WTC11 (cell line): ENCODE measurements at regions of chr11 and their contacts with region 1.

Region 1: GRCh38 chr11:70755410-70756161 is 357.3 kb downstream of the CTTN start:
- DNase-seq: peak; percentile 90
- ATAC-seq: peak; percentile 97
- H3K4me3 Mint-ChIP-seq: no peak overlapping the region
- H3K27ac Mint-ChIP-seq: no peak overlapping the region; the same call in 1 of the 2 replicates
- H3K4me1 Mint-ChIP-seq: peaks cover 15% of the 10 kb centered on the region
- H3K27me3 Mint-ChIP-seq: peaks cover 6% of the 10 kb centered on the region
- CTCF ChIP-seq: peak; percentile 92

Region 2: DNA sequence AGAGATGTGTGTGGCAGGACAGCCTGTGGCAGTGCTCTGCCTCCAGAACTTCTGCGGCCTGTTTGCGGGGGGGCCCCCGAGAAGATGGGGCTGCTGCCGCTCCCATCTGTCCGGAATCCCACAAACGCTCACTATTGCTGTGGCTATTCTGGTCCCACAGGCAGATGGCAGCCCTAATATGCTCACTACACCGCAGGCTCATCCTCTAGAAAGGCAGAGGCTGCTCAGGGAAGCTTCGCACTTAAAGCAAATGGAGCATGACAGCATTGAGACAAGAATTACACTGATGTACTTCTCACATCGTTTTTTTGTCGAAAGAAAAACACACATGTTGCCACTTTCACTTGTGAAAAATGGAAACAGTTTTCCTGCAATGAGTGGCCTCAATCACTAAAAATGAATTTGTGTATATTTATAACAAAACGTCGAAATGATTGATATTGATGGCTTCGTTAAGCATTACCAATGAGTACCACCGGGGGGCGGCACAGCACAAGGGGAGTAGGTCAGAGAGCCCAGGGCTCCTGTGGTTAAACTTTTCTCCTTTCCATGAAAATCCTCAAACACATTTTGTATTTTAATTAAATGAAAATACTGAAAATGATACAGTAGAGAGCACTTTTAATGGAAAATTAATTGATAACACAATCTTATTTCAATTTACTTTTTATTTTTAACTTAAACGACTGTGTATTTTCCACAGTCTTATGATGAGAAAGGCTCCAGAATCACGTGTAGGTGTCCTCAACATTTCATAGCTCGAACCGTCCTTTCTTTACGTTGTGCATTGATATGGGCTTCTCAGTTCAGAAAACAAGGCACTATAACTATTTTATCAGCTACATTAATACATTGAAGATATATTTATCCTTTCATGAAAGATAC is 288.1 kb before region 1 on chr11:
- CTCF ChIA-PET with region 1: interaction called, 11 read pairs
- POLR2A ChIA-PET with region 1: no interaction called
- DNase-seq: peak; percentile 82
- ATAC-seq: no peak
- H3K4me3 Mint-ChIP-seq: no peak overlapping the region
- H3K27ac Mint-ChIP-seq: no peak overlapping the region
- H3K4me1 Mint-ChIP-seq: peaks cover 34% of the 10 kb centered on the region
- H3K27me3 Mint-ChIP-seq: peaks cover 3% of the 10 kb centered on the region
- CTCF ChIP-seq: peak; percentile 88

Region 3: GRCh38 chr11:70568038-70568813 is 187.4 kb before region 1 on chr11:
- CTCF ChIA-PET with region 1: interaction called, 10 read pairs
- POLR2A ChIA-PET with region 1: no interaction called
- DNase-seq: peak; percentile 67
- ATAC-seq: peak; percentile 82
- H3K4me3 Mint-ChIP-seq: peak overlapping the region; percentile 18; the same call in 1 of the 2 replicates
- H3K27ac Mint-ChIP-seq: peak overlapping the region; percentile 91
- H3K4me1 Mint-ChIP-seq: peaks cover 21% of the 10 kb centered on the region
- H3K27me3 Mint-ChIP-seq: no peaks in the 10 kb centered on the region
- CTCF ChIP-seq: no peak

Region 4: DNA sequence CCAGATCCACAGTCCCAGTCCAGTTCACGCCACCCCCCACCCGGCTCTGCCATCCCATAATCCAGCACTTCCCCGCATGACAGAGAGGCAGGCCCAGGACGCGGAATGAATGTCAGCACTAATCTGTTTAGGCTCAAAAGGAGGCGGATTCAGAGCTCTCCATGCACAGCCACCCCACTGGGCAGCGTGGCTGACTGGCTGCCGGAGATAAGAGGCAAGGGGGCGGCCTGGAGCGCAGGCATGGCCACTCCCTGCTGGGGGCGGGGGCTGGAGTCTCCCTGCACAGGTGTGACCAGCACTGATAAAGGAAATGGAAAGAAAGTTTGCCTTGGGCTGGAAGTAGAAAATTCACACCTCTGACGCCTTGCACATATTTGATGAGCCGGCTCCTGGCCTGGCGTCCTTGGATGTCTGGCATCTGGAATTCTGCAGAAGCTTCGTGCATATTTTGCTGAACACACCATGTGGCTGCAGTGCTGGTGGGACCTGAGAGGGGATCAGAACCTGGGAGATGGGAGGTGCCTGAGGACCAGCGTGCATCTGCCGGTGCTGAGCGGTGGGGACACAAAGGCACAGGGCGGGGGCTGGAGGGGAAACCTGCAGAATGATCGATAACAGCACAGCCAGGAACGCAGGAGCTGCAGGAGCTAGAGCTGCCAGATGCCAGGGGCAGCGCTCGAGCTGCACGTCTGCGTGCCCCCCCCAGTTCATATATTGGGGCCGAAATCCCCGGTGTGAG is 12.9 kb before region 1 on chr11:
- CTCF ChIA-PET with region 1: interaction called, 14 read pairs
- POLR2A ChIA-PET with region 1: no interaction called
- DNase-seq: peak; percentile 85
- ATAC-seq: peak; percentile 93
- H3K4me3 Mint-ChIP-seq: peak overlapping the region; percentile 26
- H3K27ac Mint-ChIP-seq: peak overlapping the region; percentile 36
- H3K4me1 Mint-ChIP-seq: peaks cover 54% of the 10 kb centered on the region
- H3K27me3 Mint-ChIP-seq: no peaks in the 10 kb centered on the region
- CTCF ChIP-seq: no peak

Region 5: GRCh38 chr11:70796648-70797227 is 41.2 kb after region 1 on chr11:
- CTCF ChIA-PET with region 1: no interaction called
- POLR2A ChIA-PET with region 1: no interaction called
- DNase-seq: peak; percentile 46
- ATAC-seq: peak; percentile 73
- H3K4me3 Mint-ChIP-seq: no peak overlapping the region
- H3K27ac Mint-ChIP-seq: no peak overlapping the region
- H3K4me1 Mint-ChIP-seq: peaks cover 6% of the 10 kb centered on the region
- H3K27me3 Mint-ChIP-seq: no peaks in the 10 kb centered on the region
- CTCF ChIP-seq: 0 out of 2 replicates have a peak, but pooled peaks have one; percentile 20